AG04449 (cell line): ENCODE measurements at regions of chr2 and their contacts with region 1.

Region 1: GRCh38 chr2:174465327-174465726 is 21.5 kb downstream of the GPR155 start:
- DNase-seq: no peak
- H3K4me3 ChIP-seq: no peak overlapping the region
- CTCF ChIP-seq: no peak

Region 2: GRCh38 chr2:174266288-174266687 is 199.0 kb before region 1 on chr2:
- CTCF ChIA-PET with region 1: no interaction called
- POLR2A ChIA-PET with region 1: no interaction called
- DNase-seq: no peak
- H3K4me3 ChIP-seq: no peak overlapping the region
- CTCF ChIP-seq: no peak

Region 3: DNA sequence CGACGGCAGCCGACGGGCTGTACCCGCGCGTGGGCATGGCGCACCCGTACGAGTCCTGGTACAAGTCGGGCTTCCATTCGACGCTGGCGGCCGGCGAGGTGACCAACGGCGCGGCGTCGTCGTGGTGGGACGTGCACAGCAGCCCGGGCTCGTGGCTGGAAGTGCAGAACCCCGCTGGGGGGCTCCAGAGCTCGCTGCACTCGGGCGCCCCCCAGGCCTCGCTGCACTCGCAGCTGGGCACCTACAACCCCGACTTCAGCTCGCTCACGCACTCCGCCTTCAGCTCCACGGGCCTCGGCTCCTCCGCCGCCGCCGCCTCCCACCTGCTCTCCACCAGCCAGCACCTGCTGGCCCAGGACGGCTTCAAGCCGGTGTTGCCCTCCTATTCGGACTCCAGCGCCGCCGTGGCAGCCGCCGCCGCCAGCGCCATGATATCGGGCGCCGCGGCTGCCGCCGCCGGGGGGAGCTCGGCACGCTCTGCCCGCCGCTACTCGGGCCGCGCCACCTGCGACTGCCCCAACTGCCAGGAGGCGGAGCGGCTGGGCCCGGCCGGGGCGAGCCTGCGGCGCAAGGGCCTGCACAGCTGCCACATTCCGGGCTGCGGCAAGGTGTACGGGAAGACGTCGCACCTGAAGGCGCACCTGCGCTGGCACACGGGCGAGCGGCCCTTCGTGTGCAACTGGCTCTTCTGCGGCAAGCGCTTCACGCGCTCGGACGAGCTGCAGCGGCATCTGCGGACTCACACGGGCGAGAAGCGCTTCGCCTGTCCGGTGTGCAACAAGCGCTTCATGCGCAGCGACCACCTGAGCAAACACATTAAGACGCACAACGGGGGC is 128.6 kb before region 1 on chr2:
- CTCF ChIA-PET with region 1: no interaction called
- POLR2A ChIA-PET with region 1: no interaction called
- DNase-seq: no peak
- H3K4me3 ChIP-seq: peak overlapping the region; percentile 66
- CTCF ChIP-seq: no peak

Region 4: GRCh38 chr2:174445248-174445647 is 20.1 kb before region 1 on chr2:
- CTCF ChIA-PET with region 1: interaction called, 20 read pairs
- POLR2A ChIA-PET with region 1: interaction called, 3 read pairs
- DNase-seq: no peak
- H3K4me3 ChIP-seq: no peak overlapping the region
- CTCF ChIP-seq: no peak

Region 5: GRCh38 chr2:174522553-174522952 is 57.2 kb after region 1 on chr2:
- CTCF ChIA-PET with region 1: interaction called, 101 read pairs
- POLR2A ChIA-PET with region 1: no interaction called
- DNase-seq: no peak
- H3K4me3 ChIP-seq: no peak overlapping the region
- CTCF ChIP-seq: no peak

Region 6: DNA sequence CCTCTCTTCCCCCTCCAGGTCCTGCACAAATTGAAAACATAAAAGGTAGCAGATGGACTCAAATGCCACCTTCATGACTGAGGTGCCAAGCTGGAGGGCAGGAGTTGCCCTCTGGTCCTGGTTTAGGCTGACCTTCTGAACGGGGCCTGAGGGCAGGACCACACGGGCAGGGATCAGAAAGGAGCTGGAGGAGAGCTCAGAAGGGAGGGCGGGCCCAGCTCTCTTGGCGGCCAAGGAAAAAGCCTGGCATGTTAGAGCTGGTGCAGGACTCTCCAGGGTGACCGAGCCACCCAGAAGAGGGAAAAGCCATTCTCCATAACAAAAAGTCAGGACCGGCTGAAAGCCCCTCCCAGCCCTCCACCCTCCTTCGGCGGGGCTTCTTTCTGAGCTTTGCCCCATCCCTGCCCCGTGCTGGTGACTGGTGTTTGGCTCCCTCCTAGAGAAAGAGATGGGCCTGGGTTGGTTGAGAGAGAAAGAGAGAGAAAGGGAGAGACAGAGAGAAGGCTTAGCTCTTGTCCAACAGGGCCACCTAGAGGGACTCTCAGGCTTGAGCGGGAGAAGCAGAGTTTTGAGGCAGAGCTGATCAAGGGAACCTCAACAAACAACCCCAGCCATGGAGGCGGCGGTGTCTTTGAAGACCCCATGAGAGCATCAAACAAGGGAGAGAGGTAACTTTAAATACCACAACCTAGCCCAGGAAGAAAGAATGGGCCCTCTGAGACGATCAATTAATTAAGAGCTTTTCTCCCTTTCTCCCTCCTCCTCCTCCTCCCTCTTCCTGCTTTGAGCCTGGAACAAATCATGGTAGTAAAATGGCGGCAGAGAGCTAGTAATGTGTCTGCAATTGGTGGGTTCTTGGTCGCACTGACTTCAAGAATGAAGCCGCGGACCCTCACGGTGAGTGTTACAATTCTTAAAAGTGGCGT is 81.5 kb after region 1 on chr2:
- CTCF ChIA-PET with region 1: interaction called, 214 read pairs
- POLR2A ChIA-PET with region 1: no interaction called
- DNase-seq: no peak
- H3K4me3 ChIP-seq: no peak overlapping the region
- CTCF ChIP-seq: peak; percentile 74

Region 7: DNA sequence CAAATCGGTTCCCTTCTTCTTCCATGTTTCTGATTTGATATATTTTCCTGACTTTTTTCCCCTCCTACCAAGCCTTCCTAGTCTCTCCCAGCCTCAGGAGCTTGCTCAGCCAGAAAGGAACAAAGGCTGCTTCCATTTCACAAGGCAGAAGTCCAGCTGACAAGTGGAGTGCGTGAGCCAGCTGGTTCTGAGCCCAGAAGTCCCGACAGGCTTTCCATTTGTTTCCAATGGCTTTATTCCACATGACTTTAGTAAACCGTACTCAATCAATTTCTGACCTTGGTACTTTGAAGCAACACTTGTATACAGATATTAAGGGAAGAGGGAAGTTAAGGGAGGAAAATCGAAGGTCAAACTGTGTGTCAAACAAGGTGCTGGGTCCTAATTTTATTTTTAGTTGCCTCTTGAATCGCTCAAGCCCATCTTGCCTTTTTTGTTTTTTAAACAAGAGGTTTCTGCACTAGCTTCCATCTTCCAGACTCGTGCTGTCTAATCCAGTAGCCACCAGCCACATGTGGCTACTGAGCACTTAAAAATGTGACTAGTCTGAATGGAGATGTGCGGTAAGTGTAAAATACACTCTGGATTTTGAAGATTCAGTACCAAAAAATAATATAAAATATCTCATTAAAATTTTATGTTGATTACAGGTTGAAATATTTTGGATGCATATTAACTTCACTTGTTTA is 96.1 kb after region 1 on chr2:
- CTCF ChIA-PET with region 1: interaction called, 25 read pairs
- POLR2A ChIA-PET with region 1: no interaction called
- DNase-seq: no peak
- H3K4me3 ChIP-seq: no peak overlapping the region
- CTCF ChIP-seq: no peak

Region 8: DNA sequence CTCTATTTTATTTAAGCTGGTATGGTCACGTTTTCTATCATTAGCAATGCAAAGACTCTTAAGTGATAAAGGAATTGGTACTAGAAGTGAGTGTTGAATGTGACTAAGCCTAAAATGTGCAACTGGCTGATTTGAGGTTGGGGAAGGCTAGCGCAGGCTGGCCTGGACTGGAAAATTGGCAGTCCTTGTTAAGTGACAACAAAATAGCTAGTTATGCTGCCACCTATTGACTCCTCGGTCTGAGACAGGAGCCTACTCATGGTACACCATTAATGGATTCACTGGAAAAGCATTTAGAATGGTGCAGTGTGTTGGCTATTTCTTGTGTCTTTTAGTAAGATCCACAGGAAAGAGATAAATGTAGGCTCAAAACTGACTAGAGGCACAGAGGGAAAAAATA is 138.0 kb after region 1 on chr2:
- CTCF ChIA-PET with region 1: interaction called, 19 read pairs
- POLR2A ChIA-PET with region 1: no interaction called
- DNase-seq: no peak
- H3K4me3 ChIP-seq: no peak overlapping the region
- CTCF ChIP-seq: peak; percentile 26